ENCODE measurements at regions of chr12 and their contacts with region 1.

Region 1: DNA sequence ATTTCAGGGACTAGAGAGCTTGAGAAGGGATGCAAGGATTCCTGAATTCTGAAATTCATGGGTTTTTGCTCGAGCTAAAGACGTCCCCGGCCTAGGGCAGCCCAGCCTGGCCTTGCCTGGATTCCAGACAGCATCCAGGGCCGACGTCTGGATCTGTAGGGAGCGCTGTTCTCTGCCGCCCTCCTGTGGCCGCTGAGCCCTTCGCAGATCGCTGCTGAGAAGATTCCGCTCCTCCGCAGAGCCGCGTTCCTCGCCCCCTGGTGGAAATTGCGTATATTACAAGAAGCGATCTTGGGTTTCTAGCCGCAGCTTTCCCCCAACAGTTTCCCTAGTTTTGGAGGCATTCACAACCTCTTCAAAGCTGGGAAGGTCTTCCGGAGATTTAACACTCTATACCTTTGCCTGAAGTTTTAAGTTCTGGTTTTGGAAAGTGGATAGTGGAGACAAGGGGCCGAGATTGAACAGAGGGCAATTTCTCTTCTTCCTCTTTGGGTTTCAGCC is 5.1 kb downstream of the CISTR start:
- DNase-seq: peak; percentile 97
- ATAC-seq: peak; percentile 74
- H3K4me3 Mint-ChIP-seq: no peak overlapping the region
- H3K27ac Mint-ChIP-seq: no peak overlapping the region
- H3K4me1 Mint-ChIP-seq: peaks cover 16% of the 10 kb centered on the region
- H3K27me3 Mint-ChIP-seq: peaks cover 15% of the 10 kb centered on the region
- CTCF ChIP-seq: peak; percentile 98

Region 2: GRCh38 chr12:53675651-53676453 is 70.8 kb before region 1 on chr12 and contains the start of gene ATP5MC2:
- CTCF ChIA-PET with region 1: interaction called, 42 read pairs
- POLR2A ChIA-PET with region 1: interaction called, 4 read pairs
- DNase-seq: peak; percentile 97
- ATAC-seq: peak; percentile 88
- H3K4me3 Mint-ChIP-seq: peak within 1 kb of the TSS; percentile 95
- H3K27ac Mint-ChIP-seq: peak within 1 kb of the TSS; percentile 98
- H3K4me1 Mint-ChIP-seq: peaks cover 42% of the 10 kb centered on the region
- H3K27me3 Mint-ChIP-seq: no peaks in the 10 kb centered on the region; the same call in 1 of the 2 replicates
- CTCF ChIP-seq: peak; percentile 83
- total RNA-seq, gene ATP5MC2: 411 to 527 TPM (median 517 TPM) in 3 replicates

Region 3: GRCh38 chr12:53696285-53696654 is 50.4 kb before region 1 on chr12:
- CTCF ChIA-PET with region 1: interaction called, 232 read pairs
- POLR2A ChIA-PET with region 1: interaction called, 3 read pairs
- DNase-seq: peak; percentile 74
- ATAC-seq: peak; percentile 94
- H3K4me3 Mint-ChIP-seq: peak overlapping the region; percentile 78
- H3K27ac Mint-ChIP-seq: peak overlapping the region; percentile 100
- H3K4me1 Mint-ChIP-seq: peaks cover 35% of the 10 kb centered on the region
- H3K27me3 Mint-ChIP-seq: peaks cover 59% of the 10 kb centered on the region
- CTCF ChIP-seq: no peak

Region 4: DNA sequence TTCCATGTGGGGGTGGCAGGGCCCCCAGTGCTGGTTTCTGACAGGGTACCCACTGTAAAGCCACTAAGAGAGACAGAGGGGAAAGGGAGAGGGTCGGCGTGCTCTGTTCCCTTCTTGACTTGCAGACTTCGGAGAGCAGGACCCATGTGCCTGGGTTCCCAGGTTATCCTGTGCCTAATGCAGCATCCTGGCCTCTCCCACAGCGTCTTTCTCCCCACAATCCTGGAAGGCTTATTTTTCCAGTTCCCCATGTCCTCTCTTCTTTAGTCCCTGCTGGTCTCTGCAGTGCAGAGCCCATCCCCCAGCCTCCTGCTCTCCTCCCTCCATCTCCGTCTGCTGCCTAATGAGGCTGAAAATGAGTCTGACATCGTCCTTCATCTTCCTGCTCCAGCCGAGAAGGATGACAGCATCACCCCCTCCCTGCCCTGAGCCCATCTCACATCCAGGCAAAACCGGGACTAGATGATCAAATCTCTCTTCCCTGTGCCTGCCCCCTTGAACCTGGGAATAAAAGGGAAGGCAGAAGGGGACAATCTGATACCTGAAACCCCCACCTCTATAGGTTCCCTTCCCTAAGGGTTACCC is 34.5 kb before region 1 on chr12:
- CTCF ChIA-PET with region 1: interaction called, 33 read pairs
- POLR2A ChIA-PET with region 1: no interaction called
- DNase-seq: no peak
- ATAC-seq: no peak
- H3K4me3 Mint-ChIP-seq: no peak overlapping the region
- H3K27ac Mint-ChIP-seq: no peak overlapping the region
- H3K4me1 Mint-ChIP-seq: peaks cover 7% of the 10 kb centered on the region; the same call in 1 of the 2 replicates
- H3K27me3 Mint-ChIP-seq: peaks cover 17% of the 10 kb centered on the region
- CTCF ChIP-seq: no peak

Region 5: DNA sequence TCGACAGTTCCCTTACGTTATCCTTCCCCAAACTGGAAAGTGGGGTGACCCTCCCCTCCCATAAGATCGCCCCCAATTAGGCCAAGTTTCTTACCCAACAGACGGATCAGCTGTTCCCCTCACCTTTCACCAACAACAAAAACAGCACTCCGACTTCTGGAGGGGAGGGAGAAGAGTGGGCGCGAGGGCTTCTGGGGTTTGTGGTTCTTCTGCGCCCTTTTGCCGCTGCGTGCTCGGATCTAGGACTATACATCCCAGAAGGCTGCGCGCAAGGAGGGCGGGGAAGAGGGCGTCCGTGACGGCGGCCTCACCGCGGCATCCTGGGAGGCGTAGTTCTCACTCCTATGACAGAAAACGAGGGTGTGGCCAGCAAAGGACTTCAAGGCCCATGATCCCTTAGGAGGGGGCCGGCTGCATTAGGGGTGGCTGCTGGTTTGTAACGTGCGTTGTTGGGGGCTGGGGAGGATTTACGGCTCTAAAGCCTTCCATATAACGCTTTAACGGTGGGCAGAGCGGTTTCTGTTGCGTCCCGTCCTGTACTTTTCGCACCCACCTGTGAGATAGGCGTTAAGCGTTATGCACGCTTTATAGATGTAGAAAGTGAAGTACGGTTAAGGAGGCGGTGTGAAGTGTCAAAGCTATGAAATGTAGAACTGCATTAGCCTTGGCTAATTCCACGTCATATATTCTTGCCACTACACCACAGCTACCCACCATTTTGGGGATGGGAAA is 19.2 kb before region 1 on chr12 and contains the start of gene CALCOCO1:
- CTCF ChIA-PET with region 1: interaction called, 191 read pairs
- POLR2A ChIA-PET with region 1: no interaction called
- DNase-seq: peak; percentile 98
- ATAC-seq: peak; percentile 98
- H3K4me3 Mint-ChIP-seq: peak within 1 kb of the TSS; percentile 94
- H3K27ac Mint-ChIP-seq: peak within 1 kb of the TSS; percentile 88
- H3K4me1 Mint-ChIP-seq: peaks cover 27% of the 10 kb centered on the region
- H3K27me3 Mint-ChIP-seq: peaks cover 3% of the 10 kb centered on the region; the same call in 1 of the 2 replicates
- CTCF ChIP-seq: no peak
- total RNA-seq, gene CALCOCO1: 21.2 to 28.2 TPM (median 27.0 TPM) in 3 replicates

Region 6: DNA sequence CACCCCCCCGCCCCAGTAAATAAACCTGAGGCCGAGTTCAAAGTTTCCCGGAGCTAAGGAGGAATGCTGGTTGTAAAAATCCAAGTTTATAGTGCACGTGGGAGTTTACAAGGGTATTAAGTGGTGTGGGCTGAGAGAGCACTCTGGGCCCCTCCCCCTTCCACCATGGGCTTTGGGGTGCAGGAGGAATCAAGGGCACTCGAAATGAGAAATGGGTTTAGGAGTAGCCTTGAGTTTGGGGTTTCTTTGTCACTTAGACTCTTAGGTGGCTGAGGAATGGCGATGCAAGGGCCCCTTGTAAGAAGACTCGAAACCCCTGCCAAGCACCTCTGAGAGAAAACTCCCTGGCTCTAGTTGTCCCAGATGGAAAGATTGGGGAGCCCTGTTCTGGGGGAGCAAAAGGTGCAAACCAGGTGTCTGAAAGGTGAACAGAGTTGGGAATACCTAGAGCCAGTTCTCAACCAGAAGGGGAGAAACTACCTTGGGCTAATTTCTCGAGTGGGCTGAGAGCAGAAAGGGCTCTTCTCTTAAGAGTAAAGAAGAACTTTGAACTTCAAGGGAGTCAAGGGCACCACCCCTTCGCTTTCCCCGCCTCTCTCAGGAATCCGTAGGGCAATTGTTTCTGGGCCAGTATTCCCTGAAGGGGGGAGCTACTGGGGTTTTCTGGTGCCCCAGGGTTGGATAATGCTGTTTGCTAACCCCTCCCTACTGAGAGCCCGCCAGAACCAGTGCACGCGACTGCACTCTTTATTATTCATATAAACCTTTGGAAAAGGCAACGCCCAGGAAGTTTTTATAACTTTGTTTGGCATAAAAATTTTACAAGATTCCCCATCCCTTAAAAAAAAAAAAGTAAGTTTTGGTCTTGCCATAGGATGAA is 232.1 kb after region 1 on chr12:
- CTCF ChIA-PET with region 1: no interaction called
- POLR2A ChIA-PET with region 1: no interaction called
- DNase-seq: no peak
- ATAC-seq: no peak
- H3K4me3 Mint-ChIP-seq: no peak overlapping the region
- H3K27ac Mint-ChIP-seq: no peak overlapping the region
- H3K4me1 Mint-ChIP-seq: peaks cover 24% of the 10 kb centered on the region
- H3K27me3 Mint-ChIP-seq: peaks cover 100% of the 10 kb centered on the region
- CTCF ChIP-seq: no peak

Measured in WTC11 (cell line).